Heart left ventricle (tissue), 16 donors: ENCODE measurements at regions of chr7 and their contacts with region 1.

Region 1: DNA sequence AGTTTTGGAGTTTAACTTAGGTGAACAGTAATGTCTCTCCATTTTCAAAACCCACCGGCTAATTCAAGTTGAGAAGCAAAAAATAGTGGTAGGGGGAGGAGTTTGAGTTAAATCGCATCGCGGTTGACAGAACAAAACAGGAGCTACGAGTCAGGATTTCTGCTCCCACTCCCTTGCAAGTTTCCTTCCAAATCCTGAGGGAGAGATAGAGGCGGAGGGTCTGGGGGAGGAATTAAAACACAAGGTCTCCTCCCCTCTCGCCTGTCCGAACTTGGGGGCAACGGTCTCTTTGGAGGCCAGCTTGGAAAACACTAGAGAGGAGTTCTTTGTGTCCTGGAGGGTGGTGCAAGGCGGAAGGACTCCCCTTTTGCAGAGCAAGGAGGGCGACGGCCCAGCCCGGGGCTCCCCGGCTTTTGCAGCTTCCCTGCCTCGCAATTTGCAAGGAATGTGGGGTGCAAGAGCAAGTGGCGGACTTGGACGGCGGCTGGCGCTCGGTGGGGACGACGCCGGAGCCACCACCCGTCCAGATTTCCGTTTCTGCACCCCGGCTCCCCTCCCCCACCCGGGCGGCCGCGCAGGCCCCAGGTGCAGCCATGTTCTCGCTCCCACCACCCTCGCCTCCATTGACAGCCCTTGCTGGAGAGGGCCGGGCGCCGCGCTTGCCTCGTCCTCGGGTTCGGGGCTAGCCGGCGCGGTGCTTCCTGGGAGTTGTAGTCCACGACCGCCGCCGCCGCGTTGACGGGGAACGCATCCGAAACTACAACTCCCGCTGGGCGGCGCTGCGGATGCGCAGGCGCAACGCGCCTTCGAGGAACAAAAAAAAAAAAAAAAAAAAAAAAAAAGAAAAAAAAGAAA is 454 bp upstream of the GTF2I start:
- DNase-seq: peak; percentile 99 to 100 (median 99)
- ATAC-seq: peak; percentile 92 to 96 (median 93)
- H3K4me3 ChIP-seq: peak overlapping the region; percentile 72 to 100 (median 99)
- H3K27ac ChIP-seq: peak overlapping the region; percentile 97 to 100 (median 100)
- H3K4me1 ChIP-seq: peaks cover 0 to 47% (median 38%) of the 10 kb centered on the region in 12 donors
- H3K27me3 ChIP-seq: no peaks in the 10 kb centered on the region
- CTCF ChIP-seq: peak in 10 of 12 donors; percentile 24 to 60 (median 34)
- POLR2A ChIP-seq: peak in 1 of 2 donors; percentile 59

Region 2: DNA sequence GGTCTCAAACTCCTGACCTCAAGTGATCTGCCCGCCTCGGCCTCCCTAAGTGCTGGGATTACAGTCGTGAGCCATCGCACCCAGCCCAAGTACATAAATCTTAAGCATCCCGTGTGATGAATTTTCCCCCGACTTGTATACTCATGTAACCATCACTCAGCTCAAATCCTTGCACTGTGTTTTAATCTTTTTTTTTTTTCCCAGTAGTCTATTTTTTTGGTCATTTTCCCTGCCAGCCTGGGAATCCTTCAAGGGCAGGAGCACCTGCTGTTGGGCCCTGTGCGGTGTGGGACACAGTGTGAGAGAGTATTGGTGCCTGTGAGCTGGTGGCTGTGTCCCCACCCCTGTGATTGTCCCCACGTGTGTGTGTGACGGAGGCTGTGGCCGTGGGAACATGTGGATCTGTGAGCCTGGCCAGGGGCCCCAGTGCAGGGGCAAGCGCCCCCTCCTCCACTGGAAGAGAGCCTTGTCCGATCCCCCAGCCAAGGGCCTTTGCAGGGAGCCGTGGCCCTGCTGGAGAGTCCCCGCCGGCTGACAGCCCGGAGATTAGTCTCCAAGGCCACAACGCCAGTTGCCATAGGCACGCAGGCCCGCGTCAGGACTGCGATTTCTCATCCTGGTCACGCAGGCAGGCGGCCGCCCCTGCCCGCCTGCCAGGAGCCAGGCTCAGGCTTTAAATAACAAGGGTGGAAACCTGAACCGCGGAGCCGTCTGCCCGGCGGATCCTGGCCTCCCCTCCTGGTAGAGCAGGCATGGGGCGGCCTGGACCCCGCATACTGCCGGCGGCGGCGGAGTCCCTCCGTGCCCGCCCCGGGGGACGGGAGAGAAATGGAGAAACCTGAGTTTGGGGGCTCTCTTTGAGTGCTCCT is 176.9 kb before region 1 on chr7:
- intact Hi-C with region 1: loop called in 1 of 10 experiments (anchors 5 kb)
- DNase-seq: peak; percentile 83 to 94 (median 88)
- ATAC-seq: peak; percentile 46 to 74 (median 68)
- H3K4me3 ChIP-seq: peak overlapping the region; percentile 4 to 63 (median 54)
- H3K27ac ChIP-seq: peak overlapping the region; percentile 83 to 99 (median 94)
- H3K4me1 ChIP-seq: peaks cover 0 to 76% (median 53%) of the 10 kb centered on the region in 12 donors
- H3K27me3 ChIP-seq: no peaks in the 10 kb centered on the region
- CTCF ChIP-seq: no peak
- POLR2A ChIP-seq: peak; percentile 14 to 74

Region 3: DNA sequence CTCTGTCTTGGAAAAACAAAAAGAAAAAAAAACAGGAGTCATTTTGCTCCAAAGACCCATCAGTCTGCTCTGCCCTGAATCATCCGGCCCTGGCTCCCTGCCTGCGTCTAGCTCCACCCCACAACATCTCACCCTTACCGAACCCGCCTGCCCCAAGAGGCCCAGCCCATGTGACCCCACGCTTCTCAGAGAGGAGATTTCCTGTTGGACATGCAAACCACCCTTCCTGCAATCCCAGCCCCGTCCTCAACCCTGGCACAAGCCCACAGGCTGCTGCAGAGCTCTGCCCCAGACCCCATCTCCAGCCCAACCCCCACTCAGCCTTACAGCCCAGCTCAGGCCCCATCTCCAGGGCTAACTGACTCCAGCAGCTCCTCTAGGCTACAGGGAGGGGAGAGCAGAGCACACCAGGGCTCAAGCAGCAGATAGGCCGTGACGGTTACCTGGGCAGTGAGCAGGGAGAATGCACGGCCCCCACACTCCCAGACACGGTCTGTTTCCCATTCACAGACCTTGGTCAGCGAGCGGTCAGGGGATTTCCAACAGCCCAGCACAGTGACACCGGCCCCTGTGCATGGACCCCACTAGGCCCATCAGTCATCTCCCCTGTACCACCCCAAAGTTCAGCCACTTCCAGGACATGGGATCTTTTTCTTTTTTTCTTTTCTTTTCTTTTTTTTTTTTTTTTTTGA is 69.5 kb before region 1 on chr7:
- intact Hi-C with region 1: loop called in 1 of 10 experiments (anchors 5 kb)
- DNase-seq: peak; percentile 80 to 91 (median 88)
- ATAC-seq: peak; percentile 83 to 95 (median 94)
- H3K4me3 ChIP-seq: peak overlapping the region in 3 of 12 donors; percentile 0 to 7 (median 4)
- H3K27ac ChIP-seq: peak overlapping the region in 10 of 12 donors; percentile 1 to 73 (median 37)
- H3K4me1 ChIP-seq: peaks cover 0 to 25% (median 13%) of the 10 kb centered on the region in 12 donors
- H3K27me3 ChIP-seq: no peaks in the 10 kb centered on the region
- CTCF ChIP-seq: no peak
- POLR2A ChIP-seq: no peak

Region 4: DNA sequence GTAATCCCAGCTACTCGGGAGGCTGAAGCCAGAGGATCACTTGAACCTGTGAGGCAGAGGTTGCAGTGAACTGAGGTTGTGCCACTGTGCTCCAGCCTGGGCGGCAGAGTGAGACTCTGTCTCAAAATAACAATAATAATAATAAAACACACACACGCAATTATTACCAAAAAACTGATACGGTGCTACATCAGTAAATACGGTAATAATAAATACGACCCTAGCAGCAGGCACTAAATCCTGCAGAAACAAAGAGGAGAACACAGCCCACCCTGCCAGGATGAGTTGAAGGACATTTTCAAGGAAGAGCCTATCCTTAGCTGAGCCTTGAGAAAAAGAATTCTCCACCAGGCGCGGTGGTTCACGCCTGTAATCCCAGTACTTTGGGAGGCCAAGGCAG is 33.9 kb before region 1 on chr7:
- intact Hi-C with region 1: loop called in 1 of 10 experiments (anchors 5 kb)
- DNase-seq: no peak
- ATAC-seq: no peak
- H3K4me3 ChIP-seq: no peak overlapping the region
- H3K27ac ChIP-seq: no peak overlapping the region
- H3K4me1 ChIP-seq: peaks cover 0 to 14% (median 2%) of the 10 kb centered on the region in 12 donors
- H3K27me3 ChIP-seq: no peaks in the 10 kb centered on the region
- CTCF ChIP-seq: no peak
- POLR2A ChIP-seq: no peak

Region 5: GRCh38 chr7:74683799-74684198 is 26.7 kb after region 1 on chr7:
- intact Hi-C with region 1: loop called in 1 of 10 experiments (anchors 2 kb)
- DNase-seq: no peak
- ATAC-seq: no peak
- H3K4me3 ChIP-seq: no peak overlapping the region
- H3K27ac ChIP-seq: no peak overlapping the region
- H3K4me1 ChIP-seq: peaks cover 0 to 24% (median 2%) of the 10 kb centered on the region in 12 donors
- H3K27me3 ChIP-seq: no peaks in the 10 kb centered on the region
- CTCF ChIP-seq: no peak
- POLR2A ChIP-seq: no peak

Region 6: DNA sequence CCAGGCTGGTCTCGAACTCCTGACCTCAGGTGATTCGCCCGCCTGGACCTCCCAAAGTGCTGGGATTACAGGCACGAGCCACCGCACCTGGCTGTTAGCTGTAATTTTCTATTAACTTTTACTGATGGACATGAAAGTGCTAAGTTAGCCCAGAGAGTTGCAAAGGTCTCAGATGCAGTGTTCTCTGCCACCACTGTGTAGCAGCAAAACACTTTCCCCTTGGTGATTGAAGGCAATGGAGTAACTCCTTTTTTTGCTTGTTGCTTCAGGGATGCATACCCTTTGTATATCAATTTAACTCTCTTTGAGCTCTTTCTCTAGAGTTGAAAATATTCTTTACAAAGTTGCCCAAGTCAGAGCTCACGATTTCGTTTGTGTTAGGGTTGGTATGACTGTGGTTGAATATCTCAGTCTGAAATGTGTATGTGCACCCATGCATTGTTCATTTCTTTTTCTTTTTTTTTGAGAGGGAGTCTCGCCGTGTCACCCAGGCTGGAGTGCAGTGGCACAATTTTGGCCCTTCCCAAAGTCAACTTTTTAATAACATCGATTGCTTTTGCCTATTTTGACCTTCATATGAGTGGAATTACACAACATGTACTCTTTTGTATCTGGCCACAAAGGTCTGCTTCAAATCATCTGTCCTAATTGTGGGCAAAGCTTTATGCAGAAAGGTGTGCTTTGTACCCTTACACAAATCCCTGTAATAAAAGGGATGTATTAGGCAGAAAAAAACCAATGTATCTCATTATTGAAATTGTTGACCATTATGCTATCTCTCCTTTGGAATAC is 53.0 kb after region 1 on chr7:
- intact Hi-C with region 1: loop called in 1 of 10 experiments (anchors 10 kb)
- DNase-seq: no peak
- ATAC-seq: no peak
- H3K4me3 ChIP-seq: no peak overlapping the region
- H3K27ac ChIP-seq: no peak overlapping the region
- H3K4me1 ChIP-seq: no peaks in the 10 kb centered on the region
- H3K27me3 ChIP-seq: no peaks in the 10 kb centered on the region
- CTCF ChIP-seq: peak in 1 of 12 donors; percentile 10
- POLR2A ChIP-seq: no peak